ENCODE measurements at regions of chr9 and their contacts with region 1.

Region 1: DNA sequence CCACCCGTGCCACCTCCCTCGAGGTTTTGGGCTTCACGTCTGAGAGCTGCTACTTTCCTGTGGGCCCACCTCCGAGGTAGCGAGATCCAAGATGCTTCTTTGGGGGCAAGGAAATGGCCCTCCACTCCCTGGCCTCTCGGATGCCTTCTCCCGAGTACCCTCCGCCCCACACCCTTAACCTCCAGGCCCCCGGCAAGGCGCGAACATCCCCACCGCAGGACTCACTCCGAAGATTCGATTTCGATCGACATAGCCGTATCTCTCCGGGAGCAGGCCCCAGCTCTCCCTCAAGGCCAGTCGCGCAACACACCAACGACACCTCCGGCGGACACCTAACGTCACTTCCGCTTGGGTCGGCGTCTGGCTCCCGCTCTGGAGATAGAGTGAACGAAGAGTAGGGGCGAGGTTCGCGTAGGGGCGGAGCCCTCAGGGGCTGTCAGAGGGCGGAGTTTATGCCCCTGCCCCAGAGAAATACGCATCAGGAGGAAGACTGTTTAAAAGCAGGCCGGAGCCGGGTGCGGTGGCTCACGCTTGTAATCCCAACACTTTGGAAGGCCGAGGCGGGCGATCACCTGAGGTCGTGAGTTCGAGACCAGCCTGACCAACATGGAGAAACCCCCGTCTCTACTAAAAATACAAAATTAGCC is at the start of gene SMU1:
- DNase-seq: peak; percentile 96
- ATAC-seq: peak; percentile 99
- H3K4me3 ChIP-seq: peak within 1 kb of the TSS; percentile 72 to 80
- H3K27ac ChIP-seq: peak within 1 kb of the TSS; percentile 95
- H3K4me1 ChIP-seq: peaks cover 14% of the 10 kb centered on the region; the same call in 1 of the 2 replicates
- H3K27me3 ChIP-seq: no peaks in the 10 kb centered on the region
- CTCF ChIP-seq: no peak
- total RNA-seq, gene SMU1: 30.3 TPM

Region 2: GRCh38 chr9:33170464-33171415 is 94.3 kb after region 1 on chr9:
- CTCF ChIA-PET with region 1: no interaction called
- POLR2A ChIA-PET with region 1: no interaction called
- in situ Hi-C with region 1: no loop called
- intact Hi-C with region 1: loop called (anchors 5 kb)
- DNase-seq: no peak
- ATAC-seq: no peak
- H3K4me3 ChIP-seq: no peak overlapping the region
- H3K27ac ChIP-seq: no peak overlapping the region
- H3K4me1 ChIP-seq: peaks cover 11% of the 10 kb centered on the region
- H3K27me3 ChIP-seq: no peaks in the 10 kb centered on the region
- CTCF ChIP-seq: peak; percentile 70

Region 3: GRCh38 chr9:33225319-33226149 is 149.1 kb after region 1 on chr9:
- CTCF ChIA-PET with region 1: interaction called, 4 read pairs
- POLR2A ChIA-PET with region 1: no interaction called
- in situ Hi-C with region 1: no loop called
- intact Hi-C with region 1: loop called (anchors 1 kb)
- DNase-seq: peak; percentile 66
- ATAC-seq: peak; percentile 64
- H3K4me3 ChIP-seq: no peak overlapping the region
- H3K27ac ChIP-seq: no peak overlapping the region
- H3K4me1 ChIP-seq: 0 out of 2 replicates have a peak, but pooled peaks cover 2% of the 10 kb centered on the region
- H3K27me3 ChIP-seq: no peaks in the 10 kb centered on the region; the same call in 1 of the 2 replicates
- CTCF ChIP-seq: peak; percentile 78

Region 4: GRCh38 chr9:33239921-33240320 is 163.4 kb after region 1 on chr9 and contains the start of gene SPINK4:
- CTCF ChIA-PET with region 1: interaction called, 15 read pairs
- POLR2A ChIA-PET with region 1: interaction called, 3 read pairs
- in situ Hi-C with region 1: no loop called
- intact Hi-C with region 1: no loop called
- DNase-seq: no peak
- ATAC-seq: peak; percentile 8; the same call in 1 of the 2 replicates
- H3K4me3 ChIP-seq: no peak within 1 kb of the TSS
- H3K27ac ChIP-seq: no peak within 1 kb of the TSS
- H3K4me1 ChIP-seq: no peaks in the 10 kb centered on the region
- H3K27me3 ChIP-seq: no peaks in the 10 kb centered on the region
- CTCF ChIP-seq: no peak
- total RNA-seq, gene SPINK4: not detected

Measured in Panc1 (cell line).